ENCODE measurements at regions of chr12 and their contacts with region 1.

Region 1: GRCh38 chr12:47715393-47715876 is 9.6 kb upstream of the RPAP3 start:
- DNase-seq: peak; percentile 87
- ATAC-seq: peak; percentile 86
- H3K4me3 ChIP-seq: no peak overlapping the region
- H3K4me3 Mint-ChIP-seq: no peak overlapping the region
- H3K27ac ChIP-seq: no peak overlapping the region
- H3K27ac Mint-ChIP-seq: peak overlapping the region; percentile 33
- H3K4me1 ChIP-seq: peaks cover 15 to 28% of the 10 kb centered on the region in 2 donors
- H3K4me1 Mint-ChIP-seq: peaks cover 37% of the 10 kb centered on the region
- H3K27me3 ChIP-seq: no peaks in the 10 kb centered on the region
- H3K27me3 Mint-ChIP-seq: no peaks in the 10 kb centered on the region
- CTCF ChIP-seq: peak; percentile 86

Region 2: GRCh38 chr12:45959728-45960127 is 1755.7 kb before region 1 on chr12:
- CTCF ChIA-PET with region 1: no interaction called
- POLR2A ChIA-PET with region 1: no interaction called
- intact Hi-C with region 1: no loop called
- DNase-seq: no peak
- ATAC-seq: no peak
- H3K4me3 ChIP-seq: no peak overlapping the region
- H3K4me3 Mint-ChIP-seq: no peak overlapping the region
- H3K27ac ChIP-seq: no peak overlapping the region
- H3K27ac Mint-ChIP-seq: no peak overlapping the region
- H3K4me1 ChIP-seq: no peaks in the 10 kb centered on the region
- H3K4me1 Mint-ChIP-seq: peaks cover 10% of the 10 kb centered on the region
- H3K27me3 ChIP-seq: no peaks in the 10 kb centered on the region
- H3K27me3 Mint-ChIP-seq: no peaks in the 10 kb centered on the region
- CTCF ChIP-seq: no peak

Region 3: GRCh38 chr12:47698055-47698454 is 17.4 kb before region 1 on chr12:
- CTCF ChIA-PET with region 1: interaction called, 19 read pairs
- POLR2A ChIA-PET with region 1: no interaction called
- intact Hi-C with region 1: no loop called
- DNase-seq: peak; percentile 54
- ATAC-seq: peak; percentile 68
- H3K4me3 ChIP-seq: peak overlapping the region in 1 of 5 experiments; percentile 11
- H3K4me3 Mint-ChIP-seq: peak overlapping the region; percentile 21
- H3K27ac ChIP-seq: peak overlapping the region in 1 of 2 donors; percentile 39
- H3K27ac Mint-ChIP-seq: peak overlapping the region; percentile 22
- H3K4me1 ChIP-seq: peaks cover 17 to 20% of the 10 kb centered on the region in 2 donors
- H3K4me1 Mint-ChIP-seq: peaks cover 46% of the 10 kb centered on the region
- H3K27me3 ChIP-seq: no peaks in the 10 kb centered on the region
- H3K27me3 Mint-ChIP-seq: no peaks in the 10 kb centered on the region
- CTCF ChIP-seq: no peak

Region 4: DNA sequence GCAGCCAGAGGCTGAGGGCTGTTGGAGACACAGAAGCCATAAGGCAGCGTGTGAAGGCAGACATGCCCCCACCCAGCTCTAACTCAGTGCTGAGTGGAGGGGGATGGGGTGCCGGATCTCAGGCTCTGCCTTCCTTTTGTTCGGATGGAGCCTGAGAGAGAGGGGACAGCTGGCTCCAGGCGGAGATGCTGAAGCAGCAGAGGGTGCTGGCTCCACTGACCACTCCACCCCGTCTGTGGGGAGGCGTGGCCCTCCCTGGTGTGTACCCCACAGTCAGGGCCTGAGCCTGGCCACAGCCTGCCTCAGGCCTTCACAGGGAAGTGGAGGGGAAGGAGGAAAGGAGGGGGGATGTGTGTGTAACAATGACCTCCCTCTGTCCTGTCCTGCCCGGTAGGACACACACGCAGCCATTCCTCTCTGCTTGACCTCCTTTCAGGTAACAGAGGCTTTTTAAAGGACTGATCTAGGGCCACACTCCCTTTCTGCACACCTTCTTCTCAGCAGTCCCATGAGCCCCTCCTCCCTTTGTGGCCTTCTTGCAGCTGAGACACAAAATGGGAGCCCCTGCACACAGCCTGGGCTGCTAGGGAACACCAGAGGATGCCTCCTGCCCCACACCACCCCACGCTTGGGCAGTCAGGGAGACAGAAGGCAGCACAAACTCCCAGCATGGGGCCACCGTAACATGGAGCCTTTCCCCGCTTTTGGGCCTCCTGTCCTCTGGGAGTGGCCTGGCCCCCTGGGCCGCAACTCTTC is 19.5 kb after region 1 on chr12:
- CTCF ChIA-PET with region 1: interaction called, 270 read pairs
- POLR2A ChIA-PET with region 1: no interaction called
- intact Hi-C with region 1: loop called (anchors 2 kb)
- DNase-seq: no peak
- ATAC-seq: no peak
- H3K4me3 ChIP-seq: no peak overlapping the region
- H3K4me3 Mint-ChIP-seq: no peak overlapping the region
- H3K27ac ChIP-seq: no peak overlapping the region
- H3K27ac Mint-ChIP-seq: no peak overlapping the region
- H3K4me1 ChIP-seq: peaks cover 9 to 18% of the 10 kb centered on the region in 2 donors
- H3K4me1 Mint-ChIP-seq: peaks cover 17% of the 10 kb centered on the region
- H3K27me3 ChIP-seq: no peaks in the 10 kb centered on the region
- H3K27me3 Mint-ChIP-seq: no peaks in the 10 kb centered on the region
- CTCF ChIP-seq: no peak

Region 5: DNA sequence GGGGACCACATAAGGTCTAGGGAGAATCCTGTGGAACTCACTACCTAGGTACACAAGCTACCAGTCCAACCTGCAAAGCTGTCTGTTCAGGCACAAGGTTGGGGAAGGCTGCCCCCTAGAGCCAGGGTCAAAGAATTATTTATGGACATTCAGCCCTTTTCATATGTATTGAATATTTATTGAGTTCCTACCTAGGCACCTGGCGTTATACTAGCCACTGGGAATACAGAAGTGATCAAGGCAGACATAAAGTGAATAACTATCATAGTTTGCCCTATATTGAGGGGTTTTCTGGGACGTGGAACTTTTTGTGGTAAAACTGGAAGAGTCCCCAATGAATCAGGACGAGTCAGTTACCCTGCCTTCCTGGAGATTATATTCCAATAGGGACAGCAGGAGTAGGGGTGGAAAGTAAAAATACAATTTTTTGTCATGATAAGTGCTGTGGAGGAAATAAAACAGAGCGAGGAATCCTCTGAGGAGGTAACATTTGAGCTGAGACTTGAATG is 51.8 kb after region 1 on chr12:
- CTCF ChIA-PET with region 1: interaction called, 584 read pairs
- POLR2A ChIA-PET with region 1: interaction called, 5 read pairs
- intact Hi-C with region 1: loop called (anchors 1 kb)
- DNase-seq: peak; percentile 78
- ATAC-seq: peak; percentile 74
- H3K4me3 ChIP-seq: no peak overlapping the region
- H3K4me3 Mint-ChIP-seq: no peak overlapping the region
- H3K27ac ChIP-seq: no peak overlapping the region
- H3K27ac Mint-ChIP-seq: no peak overlapping the region
- H3K4me1 ChIP-seq: peaks cover 5 to 15% of the 10 kb centered on the region in 2 donors
- H3K4me1 Mint-ChIP-seq: peaks cover 9% of the 10 kb centered on the region
- H3K27me3 ChIP-seq: no peaks in the 10 kb centered on the region
- H3K27me3 Mint-ChIP-seq: peaks cover 4% of the 10 kb centered on the region
- CTCF ChIP-seq: peak; percentile 80

Region 6: DNA sequence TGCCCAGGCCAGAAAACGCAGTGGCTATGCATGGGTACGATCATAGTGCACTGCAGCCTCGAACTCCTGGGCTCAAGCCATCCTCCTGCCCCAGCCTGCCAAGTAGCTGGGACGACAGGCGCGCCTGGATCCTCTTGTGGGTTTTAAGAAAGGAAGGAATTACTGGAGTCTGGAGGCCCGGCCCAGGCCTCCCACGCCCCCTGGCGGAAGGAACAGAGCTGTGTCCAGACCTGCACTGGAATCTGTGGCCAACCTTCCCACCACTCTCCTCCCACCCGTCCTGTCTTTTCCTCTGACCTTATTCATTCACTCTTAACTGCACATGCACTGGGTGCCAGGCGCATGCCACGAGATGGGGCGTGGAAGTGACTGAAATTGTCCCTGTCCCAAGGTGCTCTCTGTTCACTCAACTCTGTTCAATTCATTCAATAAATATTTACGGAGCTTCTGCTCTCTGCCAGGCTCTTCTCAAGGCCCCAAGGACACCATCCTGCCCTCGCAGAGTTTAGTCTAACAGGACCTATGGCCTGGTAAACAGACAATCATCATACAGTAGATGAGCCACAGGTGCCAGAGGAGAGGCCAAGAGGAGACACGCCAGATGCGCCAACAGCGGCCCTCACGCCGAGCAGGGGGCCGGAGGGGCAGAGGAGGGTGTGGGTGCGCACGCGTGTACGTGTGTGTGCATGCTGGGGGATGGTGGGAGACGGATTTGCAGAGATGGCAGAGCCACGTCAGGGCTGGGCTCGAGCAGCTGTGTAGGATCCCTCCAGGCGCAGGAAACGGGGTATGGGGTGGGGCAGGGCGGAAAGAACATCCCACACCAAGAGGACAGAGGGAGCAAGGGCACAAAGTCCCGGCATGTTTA is 234.2 kb after region 1 on chr12:
- CTCF ChIA-PET with region 1: no interaction called
- POLR2A ChIA-PET with region 1: no interaction called
- intact Hi-C with region 1: loop called (anchors 2 kb)
- DNase-seq: peak; percentile 53
- ATAC-seq: peak; percentile 36
- H3K4me3 ChIP-seq: no peak overlapping the region
- H3K4me3 Mint-ChIP-seq: no peak overlapping the region
- H3K27ac ChIP-seq: no peak overlapping the region
- H3K27ac Mint-ChIP-seq: no peak overlapping the region
- H3K4me1 ChIP-seq: no peaks in the 10 kb centered on the region
- H3K4me1 Mint-ChIP-seq: no peaks in the 10 kb centered on the region
- H3K27me3 ChIP-seq: peaks cover 0 to 14% (median 0%) of the 10 kb centered on the region in 4 experiments
- H3K27me3 Mint-ChIP-seq: peaks cover 21% of the 10 kb centered on the region
- CTCF ChIP-seq: peak; percentile 73